ENCODE measurements at regions of chr17 and their contacts with region 1.

Region 1: DNA sequence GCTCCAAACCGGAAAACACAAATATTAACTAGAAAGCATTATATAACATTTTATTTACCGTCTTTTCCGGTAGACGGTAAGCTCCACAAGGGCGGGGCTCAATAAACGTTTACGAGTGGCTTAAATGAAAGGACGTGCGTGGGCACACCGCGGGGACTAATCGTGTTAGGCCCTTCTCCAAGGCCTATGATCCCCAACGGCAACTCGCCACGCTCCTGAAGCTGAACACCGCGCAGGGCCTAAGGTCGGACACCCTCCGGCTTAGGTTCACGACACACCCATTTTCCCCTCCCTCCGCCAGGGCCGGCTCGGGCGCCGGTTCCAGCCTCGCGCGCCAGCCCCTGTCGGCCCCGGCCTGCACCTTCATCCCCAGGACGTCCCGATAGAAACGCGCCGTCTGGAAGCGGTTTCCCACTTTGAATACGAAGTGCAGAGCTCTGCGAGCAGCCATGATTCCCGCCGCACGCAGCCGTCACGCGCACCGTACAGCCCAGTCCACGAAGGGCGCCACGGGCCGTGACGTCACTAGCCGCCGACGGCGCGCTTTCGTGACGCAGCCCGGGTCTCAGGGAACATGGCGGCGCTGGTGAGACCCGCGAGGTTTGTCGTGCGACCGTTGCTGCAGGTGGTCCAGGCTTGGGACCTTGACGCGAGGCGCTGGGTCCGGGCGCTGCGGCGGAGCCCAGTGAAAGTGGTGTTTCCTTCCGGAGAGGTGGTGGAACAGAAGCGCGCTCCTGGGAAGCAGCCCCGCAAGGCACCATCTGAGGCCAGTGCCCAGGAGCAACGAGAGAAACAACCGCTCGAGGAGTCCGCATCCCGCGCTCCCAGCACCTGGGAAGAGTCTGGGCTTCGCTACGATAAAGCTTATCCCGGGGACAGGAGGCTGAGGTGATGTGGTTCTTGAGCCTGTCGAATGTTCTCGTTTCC is at the starts of genes GLOD4 and MRM3:
- DNase-seq: peak; percentile 88

Region 2: GRCh38 chr17:996554-997344 is 214.7 kb after region 1 on chr17 and contains the start of gene TIMM22:
- in situ Hi-C with region 1: loop called (anchors 25 kb)
- DNase-seq: peak; percentile 99

Measured in ACHN (cell line).